ENCODE measurements at regions of chr17 and their contacts with region 1.

Region 1: DNA sequence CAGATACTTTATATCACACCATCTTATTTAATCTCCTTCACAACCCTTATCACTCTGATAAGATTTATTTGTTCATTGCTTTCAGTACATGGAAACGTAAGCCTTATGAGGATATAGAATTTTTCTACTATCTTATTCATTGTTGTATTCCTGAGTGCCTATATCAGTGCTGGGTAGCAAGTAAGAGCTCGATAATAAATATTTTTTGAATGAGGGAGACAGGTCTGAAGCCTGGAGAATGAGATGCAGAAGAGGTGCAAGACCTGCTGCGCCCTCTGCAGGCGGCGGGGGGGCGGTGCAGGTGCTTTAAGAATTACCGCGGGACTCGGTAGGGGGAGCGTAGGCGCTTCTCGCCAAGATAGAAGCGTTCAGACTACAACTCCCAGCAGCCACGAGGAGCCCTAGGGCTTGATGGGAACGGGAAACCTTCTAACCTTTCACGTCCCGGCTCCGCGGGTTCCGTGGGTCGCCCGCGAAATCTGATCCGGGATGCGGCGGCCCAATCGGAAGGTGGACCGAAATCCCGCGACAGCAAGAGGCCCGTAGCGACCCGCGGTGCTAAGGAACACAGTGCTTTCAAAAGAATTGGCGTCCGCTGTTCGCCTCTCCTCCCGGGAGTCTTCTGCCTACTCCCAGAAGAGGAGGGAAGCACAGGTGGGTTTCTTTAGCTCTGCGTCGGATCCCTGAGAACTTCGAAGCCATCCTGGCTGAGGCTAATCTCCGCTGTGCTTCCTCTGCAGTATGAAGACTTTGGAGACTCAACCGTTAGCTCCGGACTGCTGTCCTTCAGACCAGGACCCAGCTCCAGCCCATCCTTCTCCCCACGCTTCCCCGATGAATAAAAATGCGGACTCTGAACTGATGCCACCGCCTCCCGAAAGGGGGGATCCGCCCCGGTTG is at the start of gene WRAP53:
- DNase-seq: peak; percentile 96 to 97
- ATAC-seq: peak; percentile 72 to 92 (median 78)
- H3K4me3 ChIP-seq: peak within 1 kb of the TSS; percentile 87
- H3K4me3 Mint-ChIP-seq: peak within 1 kb of the TSS; percentile 92
- H3K27ac ChIP-seq: peak within 1 kb of the TSS; percentile 92
- H3K27ac Mint-ChIP-seq: peak within 1 kb of the TSS; percentile 96 to 100
- H3K4me1 ChIP-seq: peaks cover 26% of the 10 kb centered on the region
- H3K4me1 Mint-ChIP-seq: peaks cover 34 to 37% of the 10 kb centered on the region in 2 donors
- H3K27me3 ChIP-seq: no peaks in the 10 kb centered on the region
- H3K27me3 Mint-ChIP-seq: no peaks in the 10 kb centered on the region
- CTCF ChIP-seq: peak; percentile 99
- total RNA-seq, gene WRAP53: 9.9 to 12.8 (median 12.0) TPM

Region 2: GRCh38 chr17:7014261-7014994 is 673.7 kb before region 1 on chr17:
- intact Hi-C with region 1: loop called (anchors 10 kb)
- DNase-seq: peak; percentile 94 to 99
- ATAC-seq: peak; percentile 75 to 92 (median 79)
- H3K4me3 ChIP-seq: peak overlapping the region; percentile 92
- H3K4me3 Mint-ChIP-seq: peak overlapping the region; percentile 97
- H3K27ac ChIP-seq: peak overlapping the region; percentile 97
- H3K27ac Mint-ChIP-seq: peak overlapping the region; percentile 96 to 100
- H3K4me1 ChIP-seq: peaks cover 78% of the 10 kb centered on the region
- H3K4me1 Mint-ChIP-seq: peaks cover 80 to 86% of the 10 kb centered on the region in 2 donors
- H3K27me3 ChIP-seq: no peaks in the 10 kb centered on the region
- H3K27me3 Mint-ChIP-seq: no peaks in the 10 kb centered on the region
- CTCF ChIP-seq: peak; percentile 73

Region 3: GRCh38 chr17:7280519-7281429 is 407.4 kb before region 1 on chr17:
- intact Hi-C with region 1: loop called (anchors 10 kb)
- DNase-seq: peak; percentile 84 to 88
- ATAC-seq: peak; percentile 89 to 95 (median 91)
- H3K4me3 ChIP-seq: peak overlapping the region; percentile 23
- H3K4me3 Mint-ChIP-seq: peak overlapping the region; percentile 90
- H3K27ac ChIP-seq: no peak overlapping the region
- H3K27ac Mint-ChIP-seq: peak overlapping the region in 1 of 2 donors; percentile 16
- H3K4me1 ChIP-seq: peaks cover 31% of the 10 kb centered on the region
- H3K4me1 Mint-ChIP-seq: peaks cover 22 to 31% of the 10 kb centered on the region in 2 donors
- H3K27me3 ChIP-seq: peaks cover 29% of the 10 kb centered on the region
- H3K27me3 Mint-ChIP-seq: peaks cover 18 to 24% of the 10 kb centered on the region in 2 donors
- CTCF ChIP-seq: peak; percentile 94

Region 4: DNA sequence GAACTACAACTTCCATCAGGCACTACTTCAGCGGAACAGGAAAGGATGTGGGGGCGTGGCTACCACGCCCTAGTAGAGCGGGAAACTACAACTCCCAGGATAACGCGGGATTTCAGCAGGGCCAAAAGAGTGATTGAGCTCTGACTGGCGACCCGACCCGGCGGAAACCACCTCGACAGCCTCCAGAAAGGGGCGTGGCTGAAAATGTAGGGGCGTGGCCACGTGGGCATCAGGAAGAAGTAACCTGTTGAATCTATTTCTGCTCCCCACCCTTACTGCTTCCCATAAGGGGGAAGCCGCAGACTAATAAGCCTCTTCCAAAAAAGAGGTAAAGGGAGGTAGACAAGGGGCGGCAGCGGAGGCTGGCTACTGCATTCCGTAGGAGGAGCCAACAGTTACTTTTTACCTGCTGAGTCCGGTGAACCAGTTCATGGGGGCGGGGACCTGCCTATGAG is 252.9 kb before region 1 on chr17 and contains the start of gene TMEM102:
- intact Hi-C with region 1: loop called (anchors 2 kb)
- DNase-seq: peak; percentile 97 to 99
- ATAC-seq: peak; percentile 88 to 95 (median 89)
- H3K4me3 ChIP-seq: peak within 1 kb of the TSS; percentile 50
- H3K4me3 Mint-ChIP-seq: peak within 1 kb of the TSS; percentile 91
- H3K27ac ChIP-seq: peak within 1 kb of the TSS; percentile 73
- H3K27ac Mint-ChIP-seq: peak within 1 kb of the TSS; percentile 93 to 95
- H3K4me1 ChIP-seq: peaks cover 50% of the 10 kb centered on the region
- H3K4me1 Mint-ChIP-seq: peaks cover 25 to 44% of the 10 kb centered on the region in 2 donors
- H3K27me3 ChIP-seq: peaks cover 19% of the 10 kb centered on the region
- H3K27me3 Mint-ChIP-seq: peaks cover 10 to 17% of the 10 kb centered on the region in 2 donors
- CTCF ChIP-seq: no peak
- total RNA-seq, gene TMEM102: 5.1 to 8.6 (median 7.0) TPM

Region 5: GRCh38 chr17:7515911-7516610 is 172.1 kb before region 1 on chr17:
- intact Hi-C with region 1: loop called (anchors 10 kb)
- DNase-seq: no peak
- ATAC-seq: no peak
- H3K4me3 ChIP-seq: no peak overlapping the region
- H3K4me3 Mint-ChIP-seq: no peak overlapping the region
- H3K27ac ChIP-seq: no peak overlapping the region
- H3K27ac Mint-ChIP-seq: no peak overlapping the region
- H3K4me1 ChIP-seq: no peaks in the 10 kb centered on the region
- H3K4me1 Mint-ChIP-seq: peaks cover 0 to 11% of the 10 kb centered on the region in 2 donors
- H3K27me3 ChIP-seq: no peaks in the 10 kb centered on the region
- H3K27me3 Mint-ChIP-seq: no peaks in the 10 kb centered on the region
- CTCF ChIP-seq: no peak

Region 6: DNA sequence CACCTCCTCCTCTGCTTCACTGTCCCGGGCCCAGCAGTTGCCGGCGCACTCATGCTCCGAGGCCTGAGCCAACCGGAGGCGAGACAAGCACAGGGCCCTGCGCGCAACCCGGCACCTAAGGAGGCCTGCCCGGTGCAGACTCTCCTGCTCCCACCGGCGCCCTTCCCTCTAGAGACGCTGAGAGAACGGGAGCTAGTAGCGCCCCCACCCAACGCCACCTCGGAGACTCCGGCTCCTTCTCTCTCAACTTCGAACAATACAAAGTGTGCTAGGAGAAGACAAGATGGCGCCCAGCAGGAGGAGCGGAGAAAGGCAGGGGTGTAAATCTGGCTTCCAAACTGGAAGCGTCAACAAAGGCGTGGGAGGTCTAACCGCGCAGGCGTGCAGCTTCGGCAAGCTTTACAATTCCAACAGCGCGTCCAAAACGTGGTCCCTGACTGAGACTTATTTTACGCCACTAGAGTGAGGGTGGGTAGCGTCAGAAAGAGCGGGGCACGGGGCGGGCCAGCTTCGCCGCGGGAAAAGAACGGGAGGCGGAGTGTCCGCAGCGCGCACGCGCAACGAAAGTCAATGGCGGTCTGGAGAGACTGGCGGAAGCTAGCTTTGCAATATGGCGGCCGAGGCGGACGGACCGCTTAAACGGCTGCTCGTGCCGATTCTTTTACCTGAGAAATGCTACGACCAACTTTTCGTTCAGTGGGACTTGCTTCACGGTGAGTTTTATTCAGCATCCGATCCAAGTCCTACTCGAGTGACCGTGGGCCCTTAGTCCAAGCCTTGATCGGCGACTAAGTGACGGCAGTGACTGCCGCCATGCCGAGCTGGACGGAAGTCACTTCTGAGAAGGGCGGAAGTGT is 104.7 kb before region 1 on chr17 and contains the start of gene MPDU1:
- intact Hi-C with region 1: loop called (anchors 1 kb)
- DNase-seq: peak; percentile 93 to 98
- ATAC-seq: peak; percentile 80 to 93 (median 83)
- H3K4me3 ChIP-seq: peak within 1 kb of the TSS; percentile 69
- H3K4me3 Mint-ChIP-seq: peak within 1 kb of the TSS; percentile 96
- H3K27ac ChIP-seq: peak within 1 kb of the TSS; percentile 88
- H3K27ac Mint-ChIP-seq: peak within 1 kb of the TSS; percentile 98 to 99
- H3K4me1 ChIP-seq: peaks cover 57% of the 10 kb centered on the region
- H3K4me1 Mint-ChIP-seq: peaks cover 38 to 55% of the 10 kb centered on the region in 2 donors
- H3K27me3 ChIP-seq: no peaks in the 10 kb centered on the region
- H3K27me3 Mint-ChIP-seq: no peaks in the 10 kb centered on the region
- CTCF ChIP-seq: no peak
- total RNA-seq, gene MPDU1: 26.3 to 29.2 (median 27.1) TPM

Region 7: DNA sequence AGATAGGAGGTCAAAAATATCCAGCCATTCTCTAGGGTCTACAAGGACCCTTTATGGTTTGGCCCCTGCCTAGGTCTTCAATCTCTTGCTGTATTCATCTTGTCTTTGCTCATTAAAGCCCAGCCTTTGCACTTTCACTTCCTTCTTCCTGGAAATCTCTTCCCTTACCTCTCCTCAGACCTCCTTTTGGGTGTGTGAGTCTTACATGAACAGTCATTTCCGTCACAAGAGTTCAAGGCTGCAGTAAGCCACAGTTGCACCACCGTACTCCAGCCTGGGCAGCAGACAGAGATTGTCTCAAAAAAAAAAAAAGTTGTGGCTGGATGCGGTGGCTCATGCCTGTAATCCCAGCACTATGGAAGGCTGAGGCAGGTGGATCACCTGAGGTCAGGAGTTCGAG is 43.4 kb before region 1 on chr17:
- intact Hi-C with region 1: no loop called
- DNase-seq: no peak
- ATAC-seq: peak in 1 of 3 donors; percentile 35
- H3K4me3 ChIP-seq: no peak overlapping the region
- H3K4me3 Mint-ChIP-seq: no peak overlapping the region
- H3K27ac ChIP-seq: no peak overlapping the region
- H3K27ac Mint-ChIP-seq: no peak overlapping the region
- H3K4me1 ChIP-seq: peaks cover under 1% of the 10 kb centered on the region
- H3K4me1 Mint-ChIP-seq: peaks cover 0 to 5% of the 10 kb centered on the region in 2 donors
- H3K27me3 ChIP-seq: peaks cover 4% of the 10 kb centered on the region
- H3K27me3 Mint-ChIP-seq: peaks cover under 1 to 11% of the 10 kb centered on the region in 2 donors
- CTCF ChIP-seq: no peak

Region 8: GRCh38 chr17:7844292-7845154 is 156.4 kb after region 1 on chr17:
- intact Hi-C with region 1: loop called (anchors 5 kb)
- DNase-seq: peak; percentile 89 to 92
- ATAC-seq: peak; percentile 33 to 60 (median 41)
- H3K4me3 ChIP-seq: peak overlapping the region; percentile 96
- H3K4me3 Mint-ChIP-seq: peak overlapping the region; percentile 100
- H3K27ac ChIP-seq: peak overlapping the region; percentile 100
- H3K27ac Mint-ChIP-seq: peak overlapping the region; percentile 100
- H3K4me1 ChIP-seq: peaks cover 46% of the 10 kb centered on the region
- H3K4me1 Mint-ChIP-seq: peaks cover 39 to 70% of the 10 kb centered on the region in 2 donors
- H3K27me3 ChIP-seq: no peaks in the 10 kb centered on the region
- H3K27me3 Mint-ChIP-seq: peaks cover 0 to 2% of the 10 kb centered on the region in 2 donors
- CTCF ChIP-seq: no peak